WTC11 (cell line): ENCODE measurements at regions of chr2 and their contacts with region 1.

Region 1: DNA sequence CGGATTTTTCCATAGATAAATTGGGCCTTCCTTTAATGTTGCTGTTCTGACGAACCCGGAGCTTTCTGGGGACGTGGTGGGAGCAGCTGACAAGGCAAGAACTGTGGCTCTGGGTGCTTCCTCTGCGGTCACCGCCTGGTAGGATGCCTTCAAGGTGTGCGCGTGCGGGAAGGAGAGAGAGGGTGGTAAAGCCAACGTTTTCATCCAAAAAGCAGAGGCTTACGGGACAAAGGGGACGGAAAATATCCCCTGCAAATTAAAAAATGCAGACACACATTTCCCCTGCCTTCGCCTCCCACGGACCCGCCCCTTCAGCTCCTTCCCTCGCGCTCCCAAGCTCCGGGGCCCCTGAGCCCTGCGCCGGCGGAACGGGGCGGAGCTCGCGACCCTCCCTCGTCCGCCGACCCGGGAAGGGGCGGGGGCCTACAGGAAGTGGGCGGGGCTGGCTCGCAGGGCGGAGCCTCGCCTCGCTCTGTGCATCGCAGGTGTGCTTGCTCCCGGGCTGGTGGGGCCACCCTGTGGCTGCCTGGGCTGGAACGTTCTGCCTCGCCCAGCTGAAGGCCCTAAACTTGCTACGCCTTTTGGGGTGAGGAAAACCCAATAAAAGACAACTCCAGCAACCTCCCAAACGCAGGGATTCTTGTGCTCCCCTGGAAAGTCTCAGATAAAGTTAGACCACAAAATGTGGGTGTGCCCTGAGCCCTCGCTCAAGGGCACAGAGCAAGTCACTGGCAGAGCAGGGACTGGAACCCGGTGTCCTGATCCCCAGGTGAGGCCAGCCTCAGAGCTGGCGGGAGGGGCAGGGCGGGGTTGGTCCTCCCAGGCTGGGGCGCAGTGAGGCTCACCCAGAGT is 25.4 kb upstream of the SLC66A3 start:
- DNase-seq: peak; percentile 95
- ATAC-seq: peak; percentile 91
- H3K4me3 Mint-ChIP-seq: peak overlapping the region; percentile 61
- H3K27ac Mint-ChIP-seq: no peak overlapping the region
- H3K4me1 Mint-ChIP-seq: peaks cover 12% of the 10 kb centered on the region
- H3K27me3 Mint-ChIP-seq: peaks cover 10% of the 10 kb centered on the region
- CTCF ChIP-seq: no peak

Region 2: GRCh38 chr2:11073251-11073650 is 56.6 kb before region 1 on chr2:
- CTCF ChIA-PET with region 1: interaction called, 15 read pairs
- POLR2A ChIA-PET with region 1: no interaction called
- DNase-seq: peak; percentile 85
- ATAC-seq: peak; percentile 97
- H3K4me3 Mint-ChIP-seq: no peak overlapping the region
- H3K27ac Mint-ChIP-seq: peak overlapping the region; percentile 80; the same call in 1 of the 2 replicates
- H3K4me1 Mint-ChIP-seq: peaks cover 28% of the 10 kb centered on the region
- H3K27me3 Mint-ChIP-seq: no peaks in the 10 kb centered on the region; the same call in 1 of the 2 replicates
- CTCF ChIP-seq: peak; percentile 65

Region 3: GRCh38 chr2:11154923-11155380 is 25.1 kb after region 1 on chr2:
- CTCF ChIA-PET with region 1: interaction called, 54 read pairs
- POLR2A ChIA-PET with region 1: interaction called, 10 read pairs
- DNase-seq: peak; percentile 98
- ATAC-seq: peak; percentile 94
- H3K4me3 Mint-ChIP-seq: peak overlapping the region; percentile 73
- H3K27ac Mint-ChIP-seq: peak overlapping the region; percentile 91; the same call in 1 of the 2 replicates
- H3K4me1 Mint-ChIP-seq: peaks cover 9% of the 10 kb centered on the region
- H3K27me3 Mint-ChIP-seq: peaks cover 40% of the 10 kb centered on the region
- CTCF ChIP-seq: no peak

Region 4: DNA sequence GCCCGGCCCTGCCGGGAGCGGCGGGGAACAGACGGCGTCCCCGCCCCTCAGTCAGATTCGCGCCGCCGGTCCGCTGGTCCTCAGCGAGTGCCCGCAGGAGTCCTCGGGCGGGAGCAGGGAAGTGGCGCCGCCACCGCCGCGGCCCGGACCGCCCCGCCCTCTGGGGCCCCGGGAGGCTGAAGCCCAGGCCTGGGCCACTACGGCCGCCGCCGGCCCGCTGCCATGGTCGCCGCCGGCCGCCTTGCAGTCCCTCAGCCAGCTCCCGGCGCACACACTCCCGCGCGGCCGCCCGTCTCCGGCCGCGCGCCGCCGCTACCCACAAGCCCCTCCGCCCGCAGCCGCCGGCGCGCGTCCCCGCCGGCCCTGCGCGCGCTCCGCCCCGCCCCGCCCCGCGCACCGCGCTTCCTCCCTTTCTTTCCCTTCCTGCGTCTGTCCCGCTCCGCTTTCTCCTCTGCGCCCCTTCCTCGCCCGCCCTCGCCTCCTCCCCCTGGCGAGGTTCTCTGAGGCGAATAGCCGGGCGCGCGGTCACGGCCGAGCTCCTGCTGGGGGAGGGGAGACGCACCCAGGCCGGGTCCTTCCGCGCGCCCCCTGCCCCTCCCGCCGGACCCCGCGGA is 214.6 kb after region 1 on chr2 and contains the start of gene ROCK2:
- CTCF ChIA-PET with region 1: interaction called, 12 read pairs
- POLR2A ChIA-PET with region 1: interaction called, 10 read pairs
- DNase-seq: peak; percentile 86
- ATAC-seq: peak; percentile 82
- H3K4me3 Mint-ChIP-seq: peak within 1 kb of the TSS; percentile 96
- H3K27ac Mint-ChIP-seq: peak within 1 kb of the TSS; percentile 97
- H3K4me1 Mint-ChIP-seq: peaks cover 35% of the 10 kb centered on the region
- H3K27me3 Mint-ChIP-seq: peaks cover 4% of the 10 kb centered on the region; the same call in 1 of the 2 replicates
- CTCF ChIP-seq: no peak
- total RNA-seq, gene ROCK2: 21.3 to 25.9 TPM (median 22.4 TPM) in 3 replicates

Region 5: DNA sequence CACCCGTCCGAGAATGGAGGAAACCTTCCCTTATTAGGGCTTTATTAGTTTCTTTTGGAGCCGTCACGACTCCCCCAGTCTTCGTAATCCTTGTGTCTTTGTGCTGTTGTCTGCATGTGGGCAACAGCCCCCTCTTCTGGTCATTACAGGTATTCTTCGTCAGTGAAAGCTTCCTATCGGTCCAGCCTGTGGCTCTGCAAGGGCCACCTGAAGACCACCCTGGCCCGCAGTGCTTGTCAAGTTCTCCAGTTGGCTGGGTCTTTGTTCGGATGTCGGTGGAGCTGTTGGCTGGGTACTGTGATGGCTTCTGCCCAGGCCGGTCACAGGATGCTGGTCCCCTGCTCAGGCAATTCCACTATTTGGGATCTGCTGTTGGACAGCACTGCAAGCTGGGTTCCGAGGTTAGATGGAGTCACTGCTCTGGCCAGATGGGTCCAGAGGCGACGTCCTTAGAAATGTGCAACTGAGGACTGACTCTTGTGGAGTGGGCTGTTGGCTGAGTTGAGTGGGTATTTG is 317.0 kb after region 1 on chr2:
- CTCF ChIA-PET with region 1: interaction called, 70 read pairs
- POLR2A ChIA-PET with region 1: no interaction called
- DNase-seq: peak; percentile 73
- ATAC-seq: peak; percentile 98
- H3K4me3 Mint-ChIP-seq: no peak overlapping the region
- H3K27ac Mint-ChIP-seq: no peak overlapping the region
- H3K4me1 Mint-ChIP-seq: no peaks in the 10 kb centered on the region
- H3K27me3 Mint-ChIP-seq: no peaks in the 10 kb centered on the region
- CTCF ChIP-seq: peak; percentile 83